ENCODE measurements at regions of chr3 and their contacts with region 1.

Region 1: GRCh38 chr3:15361494-15362212 is 29.3 kb upstream of the SH3BP5 start:
- DNase-seq: no peak

Region 2: GRCh38 chr3:15433531-15433930 is 71.9 kb after region 1 on chr3:
- intact Hi-C with region 1: loop called in 1 of 2 experiments (anchors 2 kb)
- DNase-seq: no peak

Measured in posterior vena cava (tissue), 2 donors.